ENCODE measurements at regions of chr19 and their contacts with region 1.

Region 1: GRCh38 chr19:48110350-48110966 is at the start of gene PLA2G4C:
- DNase-seq: peak; percentile 39
- ATAC-seq: peak; percentile 85
- H3K4me3 ChIP-seq: peak within 1 kb of the TSS; percentile 46 to 62
- H3K27ac ChIP-seq: peak within 1 kb of the TSS; percentile 78
- H3K4me1 ChIP-seq: no peaks in the 10 kb centered on the region; the same call in 1 of the 2 replicates
- H3K27me3 ChIP-seq: no peaks in the 10 kb centered on the region
- CTCF ChIP-seq: no peak
- total RNA-seq, gene PLA2G4C: 2.0 TPM

Region 2: GRCh38 chr19:48053856-48054255 is 56.6 kb before region 1 on chr19:
- CTCF ChIA-PET with region 1: no interaction called
- POLR2A ChIA-PET with region 1: no interaction called
- in situ Hi-C with region 1: no loop called
- intact Hi-C with region 1: no loop called
- DNase-seq: no peak
- ATAC-seq: no peak
- H3K4me3 ChIP-seq: no peak overlapping the region
- H3K27ac ChIP-seq: no peak overlapping the region
- H3K4me1 ChIP-seq: no peaks in the 10 kb centered on the region
- H3K27me3 ChIP-seq: no peaks in the 10 kb centered on the region
- CTCF ChIP-seq: no peak

Region 3: DNA sequence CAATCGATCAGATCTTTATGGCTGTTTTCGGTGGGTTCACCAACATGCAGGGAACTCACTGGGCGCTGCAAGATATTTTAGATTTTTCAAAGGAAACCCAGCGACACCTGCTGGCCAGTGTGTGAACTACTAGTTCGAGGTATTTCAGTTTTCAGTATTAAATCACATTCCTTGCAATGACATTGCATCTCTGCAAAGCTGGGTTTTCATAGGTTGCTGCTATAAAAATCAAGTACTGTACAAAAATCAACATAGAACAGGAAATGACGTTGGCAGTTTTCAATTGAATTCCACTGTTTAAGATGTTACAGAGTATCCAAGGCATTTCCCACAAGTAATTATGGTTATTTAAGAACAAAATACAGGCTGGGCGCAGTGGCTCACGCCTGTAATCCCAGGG is 42.1 kb after region 1 on chr19:
- CTCF ChIA-PET with region 1: interaction called, 3 read pairs
- POLR2A ChIA-PET with region 1: no interaction called
- in situ Hi-C with region 1: no loop called
- intact Hi-C with region 1: loop called (anchors 1 kb)
- DNase-seq: no peak
- ATAC-seq: peak; percentile 76
- H3K4me3 ChIP-seq: no peak overlapping the region
- H3K27ac ChIP-seq: no peak overlapping the region
- H3K4me1 ChIP-seq: peaks cover 3% of the 10 kb centered on the region; the same call in 1 of the 2 replicates
- H3K27me3 ChIP-seq: no peaks in the 10 kb centered on the region
- CTCF ChIP-seq: peak; percentile 81

Measured in Panc1 (cell line).